ENCODE measurements at regions of chr11 and their contacts with region 1.

Region 1: DNA sequence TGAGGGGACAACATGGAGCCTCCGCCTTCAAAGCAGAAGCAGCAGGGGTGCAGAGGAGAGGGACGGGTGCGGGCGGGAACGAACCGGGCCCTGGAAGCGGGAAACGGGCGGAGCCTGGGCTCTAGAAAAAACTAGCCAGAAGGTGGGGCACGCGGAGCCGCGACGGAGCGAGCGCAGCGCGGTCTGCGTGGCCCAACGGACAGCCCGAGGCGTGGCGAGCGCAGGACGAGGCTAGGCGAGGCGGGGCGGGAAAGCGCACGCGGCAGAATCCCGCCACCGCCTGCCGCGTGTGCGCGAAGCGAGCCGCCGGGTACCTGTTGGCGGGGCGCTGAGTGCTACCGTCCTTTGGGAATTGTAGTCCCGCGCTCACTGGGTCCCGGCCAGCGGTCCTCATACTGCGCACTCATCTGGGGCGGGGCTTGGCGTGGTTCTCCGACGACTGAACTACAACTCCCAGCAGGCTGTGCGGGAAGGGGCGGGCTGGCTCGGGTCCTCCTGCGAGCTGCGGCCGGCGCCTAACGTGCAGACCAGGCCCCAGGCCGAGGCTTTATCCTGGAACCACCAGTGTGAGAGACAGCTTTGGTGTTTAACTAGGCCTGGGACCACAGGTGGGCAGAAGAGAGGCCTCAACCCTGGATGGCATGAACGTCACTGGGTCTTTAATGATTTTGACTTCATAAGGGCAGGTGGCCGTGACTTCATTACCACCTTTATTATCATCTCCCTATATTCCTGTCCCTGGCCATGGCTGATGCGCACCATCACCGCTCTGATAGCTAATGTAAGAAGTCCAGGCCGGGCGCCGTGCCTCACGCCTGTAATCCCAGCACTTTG is at the start of gene ATL3:
- DNase-seq: peak; percentile 97
- H3K4me3 ChIP-seq: peak within 1 kb of the TSS; percentile 73 to 96 (median 76)
- H3K27ac ChIP-seq: peak within 1 kb of the TSS; percentile 65
- H3K4me1 ChIP-seq: peaks cover 15% of the 10 kb centered on the region
- H3K27me3 ChIP-seq: no peaks in the 10 kb centered on the region
- CTCF ChIP-seq: peak in 1 of 2 donors; percentile 9
- POLR2A ChIP-seq: peak; percentile 88
- total RNA-seq, gene ATL3: 70.0 and 70.2 TPM in 2 replicates

Region 2: GRCh38 chr11:63660972-63661371 is 10.6 kb before region 1 on chr11:
- CTCF ChIA-PET with region 1: interaction called, 10 read pairs
- POLR2A ChIA-PET with region 1: no interaction called
- dilution Hi-C with region 1: no loop called
- intact Hi-C with region 1: no loop called
- DNase-seq: no peak
- H3K4me3 ChIP-seq: no peak overlapping the region
- H3K27ac ChIP-seq: no peak overlapping the region
- H3K4me1 ChIP-seq: peaks cover 11% of the 10 kb centered on the region
- H3K27me3 ChIP-seq: no peaks in the 10 kb centered on the region
- CTCF ChIP-seq: no peak
- POLR2A ChIP-seq: no peak

Region 3: GRCh38 chr11:63709336-63709884 is 37.9 kb after region 1 on chr11:
- CTCF ChIA-PET with region 1: interaction called, 10 read pairs
- POLR2A ChIA-PET with region 1: no interaction called
- dilution Hi-C with region 1: no loop called
- intact Hi-C with region 1: no loop called
- DNase-seq: peak; percentile 62
- H3K4me3 ChIP-seq: peak overlapping the region in 1 of 3 experiments; percentile 32
- H3K27ac ChIP-seq: no peak overlapping the region
- H3K4me1 ChIP-seq: peaks cover 24% of the 10 kb centered on the region
- H3K27me3 ChIP-seq: no peaks in the 10 kb centered on the region
- CTCF ChIP-seq: no peak
- POLR2A ChIP-seq: no peak

Measured in endothelial cell of umbilical vein (primary cell).